ENCODE measurements at regions of chr5 and their contacts with region 1.

Region 1: DNA sequence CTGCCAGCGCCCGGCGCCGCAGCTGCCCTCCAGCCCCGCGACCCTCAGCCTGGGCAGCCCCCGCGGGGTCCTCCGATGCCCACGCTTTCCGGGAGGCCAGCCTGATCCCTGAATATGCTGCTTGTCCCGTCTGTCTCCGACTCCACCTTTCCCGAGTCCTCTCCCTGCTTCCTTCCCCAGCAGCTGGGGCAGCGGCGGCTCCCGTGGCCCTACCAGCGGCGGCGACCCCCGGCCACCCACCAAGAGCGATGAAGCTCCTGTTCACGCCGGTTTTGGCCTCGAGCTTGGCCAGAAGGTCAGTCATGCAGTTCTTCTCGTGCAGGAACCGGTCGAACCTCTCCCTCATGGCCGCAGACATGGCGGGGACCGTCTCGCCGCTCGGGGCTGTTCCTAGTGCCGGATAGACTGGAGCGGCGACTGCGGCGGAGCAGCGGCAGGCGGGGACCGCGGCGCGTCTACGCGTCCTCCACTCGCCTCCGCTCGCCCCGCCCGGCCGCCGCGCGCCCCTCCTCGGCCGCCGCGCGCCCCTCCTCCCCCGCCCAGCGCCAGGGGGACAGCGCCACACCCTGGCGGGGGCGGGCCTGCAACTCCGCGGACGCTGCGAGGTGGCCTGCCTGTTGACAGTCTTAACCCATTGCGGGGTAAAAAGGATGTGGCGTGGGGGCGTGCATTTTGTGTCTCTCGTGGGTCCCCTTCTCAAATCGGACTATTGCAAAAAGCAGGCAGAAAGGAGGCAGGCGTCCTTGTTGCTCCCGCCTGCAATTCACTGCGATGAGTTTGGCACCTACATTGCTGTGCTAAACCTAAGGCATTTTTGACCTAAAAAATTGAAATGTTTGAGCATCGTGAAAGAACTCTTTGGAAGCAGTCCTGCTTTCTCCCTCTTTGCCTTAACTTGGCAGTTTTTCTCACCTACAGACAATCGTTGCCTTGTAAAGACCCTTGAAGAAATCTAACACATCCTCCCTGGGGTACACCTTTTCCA is at the start of gene REEP5:
- DNase-seq: peak; percentile 96
- H3K4me3 ChIP-seq: peak within 1 kb of the TSS; percentile 88 to 96
- H3K27ac ChIP-seq: peak within 1 kb of the TSS; percentile 92
- H3K4me1 ChIP-seq: peaks cover 6 to 15% of the 10 kb centered on the region in 2 experiments; a peak in 2 of 4 replicates
- H3K27me3 ChIP-seq: no peaks in the 10 kb centered on the region
- CTCF ChIP-seq: peak; percentile 72
- EP300 ChIP-seq: no peak
- RAD21 ChIP-seq: peak; percentile 63
- polyA plus RNA-seq, gene REEP5: 90.2 and 124 TPM in 2 replicates

Region 2: DNA sequence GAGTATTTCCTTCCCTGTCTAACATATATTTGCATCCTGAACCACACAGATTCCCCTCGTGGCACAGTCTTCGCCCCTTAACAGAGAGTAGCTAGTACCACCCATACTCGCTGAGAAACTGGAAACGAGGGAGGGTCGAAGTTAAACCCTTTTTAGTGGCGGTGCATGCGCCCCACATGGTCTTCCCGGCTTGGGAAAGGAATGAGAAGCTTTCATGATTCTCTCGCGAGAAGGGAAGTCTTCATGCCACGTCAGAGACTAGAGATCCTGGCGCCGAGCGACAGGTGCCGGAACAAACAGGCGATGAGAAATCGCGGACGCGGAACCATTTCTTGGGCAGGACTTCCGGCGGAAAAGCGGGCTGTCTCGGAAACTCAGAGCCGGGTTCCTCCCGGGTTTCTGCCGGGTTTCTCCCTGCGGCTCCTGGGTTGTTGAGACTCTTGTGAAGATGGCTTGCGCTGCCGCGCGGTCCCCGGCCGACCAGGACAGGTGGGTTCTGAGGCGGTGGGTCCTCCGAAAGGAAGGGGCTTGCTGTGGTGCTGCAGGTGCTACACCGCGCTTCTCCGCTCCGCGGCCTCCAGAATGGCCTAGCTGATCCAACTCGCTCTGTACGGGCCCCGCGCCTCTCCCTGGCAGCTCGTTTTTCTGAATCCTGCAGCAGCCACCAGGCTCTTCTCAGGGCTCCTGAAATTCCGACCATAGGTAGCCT is 61.0 kb before region 1 on chr5 and contains the start of gene SRP19:
- CTCF ChIA-PET with region 1: interaction called, 3 read pairs
- POLR2A ChIA-PET with region 1: interaction called, 14 read pairs
- DNase-seq: peak; percentile 91
- H3K4me3 ChIP-seq: peak within 1 kb of the TSS; percentile 91 to 96
- H3K27ac ChIP-seq: peak within 1 kb of the TSS; percentile 86 to 88
- H3K4me1 ChIP-seq: peaks cover 18 to 22% of the 10 kb centered on the region in 2 experiments; a peak in 3 of 4 replicates
- H3K27me3 ChIP-seq: no peaks in the 10 kb centered on the region
- CTCF ChIP-seq: no peak
- EP300 ChIP-seq: no peak
- RAD21 ChIP-seq: no peak
- polyA plus RNA-seq, gene SRP19: 46.4 and 54.1 TPM in 2 replicates

Region 3: GRCh38 chr5:112895682-112896081 is 26.4 kb before region 1 on chr5:
- CTCF ChIA-PET with region 1: interaction called, 14 read pairs
- POLR2A ChIA-PET with region 1: no interaction called
- DNase-seq: no peak
- H3K4me3 ChIP-seq: no peak overlapping the region
- H3K27ac ChIP-seq: no peak overlapping the region
- H3K4me1 ChIP-seq: no peaks in the 10 kb centered on the region
- H3K27me3 ChIP-seq: no peaks in the 10 kb centered on the region
- CTCF ChIP-seq: no peak
- EP300 ChIP-seq: no peak
- RAD21 ChIP-seq: no peak

Region 4: DNA sequence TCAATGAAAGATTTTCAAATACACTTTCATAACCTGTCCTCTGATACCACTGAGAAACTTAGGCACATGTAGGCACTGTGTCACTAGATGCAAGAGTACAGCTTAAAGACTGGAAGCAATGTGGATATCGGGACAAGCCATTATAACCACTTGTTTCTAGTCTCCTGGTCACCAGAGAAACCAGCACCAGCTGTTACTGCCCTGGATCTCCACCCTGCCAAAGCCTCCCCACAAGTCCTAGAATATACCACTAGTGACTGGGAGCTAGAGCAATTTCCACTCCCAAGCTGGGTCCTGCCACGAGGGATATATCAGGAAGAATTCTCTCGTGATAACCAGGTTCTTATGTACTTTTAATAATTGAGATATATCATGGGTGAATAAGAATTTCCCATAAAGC is 19.6 kb before region 1 on chr5:
- CTCF ChIA-PET with region 1: interaction called, 17 read pairs
- POLR2A ChIA-PET with region 1: no interaction called
- DNase-seq: no peak
- H3K4me3 ChIP-seq: no peak overlapping the region
- H3K27ac ChIP-seq: no peak overlapping the region
- H3K4me1 ChIP-seq: no peaks in the 10 kb centered on the region; a peak in 1 of 4 replicates
- H3K27me3 ChIP-seq: no peaks in the 10 kb centered on the region
- CTCF ChIP-seq: no peak
- EP300 ChIP-seq: no peak
- RAD21 ChIP-seq: no peak

Region 5: GRCh38 chr5:112976432-112977309 is 54.5 kb after region 1 on chr5 and contains the start of gene DCP2:
- CTCF ChIA-PET with region 1: interaction called, 4 read pairs
- POLR2A ChIA-PET with region 1: interaction called, 11 read pairs
- DNase-seq: peak; percentile 94
- H3K4me3 ChIP-seq: peak within 1 kb of the TSS; percentile 80 to 92
- H3K27ac ChIP-seq: peak within 1 kb of the TSS; percentile 87 to 96
- H3K4me1 ChIP-seq: peaks cover 18 to 22% of the 10 kb centered on the region in 2 experiments; a peak in 3 of 4 replicates
- H3K27me3 ChIP-seq: no peaks in the 10 kb centered on the region
- CTCF ChIP-seq: no peak
- EP300 ChIP-seq: peak; percentile 16 to 67; a peak in 2 of 4 replicates
- RAD21 ChIP-seq: no peak
- polyA plus RNA-seq, gene DCP2: 6.0 and 6.9 TPM in 2 replicates

Measured in SK-N-SH (cell line).